Transverse colon (tissue), 4 donors: ENCODE measurements at regions of chr9 and their contacts with region 1.

Region 1: GRCh38 chr9:26326473-26327044 is 566.0 kb downstream of the CAAP1 start:
- DNase-seq: peak; percentile 16
- H3K4me3 ChIP-seq: no peak overlapping the region
- H3K27ac ChIP-seq: no peak overlapping the region
- H3K4me1 ChIP-seq: peaks cover 0 to 42% (median 7%) of the 10 kb centered on the region in 4 donors
- H3K27me3 ChIP-seq: no peaks in the 10 kb centered on the region
- CTCF ChIP-seq: peak; percentile 63 to 84 (median 73)
- EP300 ChIP-seq: no peak
- POLR2A ChIP-seq: no peak

Region 2: DNA sequence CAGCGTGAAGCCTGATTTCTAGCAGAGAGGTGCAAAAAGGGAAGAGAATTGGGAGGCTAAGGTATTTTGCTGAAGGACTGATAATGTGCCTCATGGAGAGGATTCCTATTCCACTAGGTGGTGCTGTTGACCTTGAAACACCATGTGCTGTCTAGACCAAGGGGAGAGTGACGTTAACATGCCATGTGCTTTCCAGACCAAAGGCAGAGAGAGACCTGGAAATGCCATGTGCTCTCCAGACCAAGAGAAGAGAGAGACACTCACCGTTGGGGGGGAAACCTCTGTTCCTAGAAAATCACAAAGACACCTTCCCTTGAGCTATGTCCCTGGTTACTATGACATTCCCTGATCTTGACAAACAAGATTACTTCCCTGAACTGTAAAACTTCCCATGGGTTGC is 362.3 kb before region 1 on chr9:
- in situ Hi-C with region 1: loop called in 1 of 4 experiments (anchors 25 kb)
- intact Hi-C with region 1: no loop called
- DNase-seq: no peak
- H3K4me3 ChIP-seq: no peak overlapping the region
- H3K27ac ChIP-seq: no peak overlapping the region
- H3K4me1 ChIP-seq: no peaks in the 10 kb centered on the region
- H3K27me3 ChIP-seq: no peaks in the 10 kb centered on the region
- CTCF ChIP-seq: peak; percentile 17 to 34 (median 27)
- EP300 ChIP-seq: no peak
- POLR2A ChIP-seq: no peak

Region 3: DNA sequence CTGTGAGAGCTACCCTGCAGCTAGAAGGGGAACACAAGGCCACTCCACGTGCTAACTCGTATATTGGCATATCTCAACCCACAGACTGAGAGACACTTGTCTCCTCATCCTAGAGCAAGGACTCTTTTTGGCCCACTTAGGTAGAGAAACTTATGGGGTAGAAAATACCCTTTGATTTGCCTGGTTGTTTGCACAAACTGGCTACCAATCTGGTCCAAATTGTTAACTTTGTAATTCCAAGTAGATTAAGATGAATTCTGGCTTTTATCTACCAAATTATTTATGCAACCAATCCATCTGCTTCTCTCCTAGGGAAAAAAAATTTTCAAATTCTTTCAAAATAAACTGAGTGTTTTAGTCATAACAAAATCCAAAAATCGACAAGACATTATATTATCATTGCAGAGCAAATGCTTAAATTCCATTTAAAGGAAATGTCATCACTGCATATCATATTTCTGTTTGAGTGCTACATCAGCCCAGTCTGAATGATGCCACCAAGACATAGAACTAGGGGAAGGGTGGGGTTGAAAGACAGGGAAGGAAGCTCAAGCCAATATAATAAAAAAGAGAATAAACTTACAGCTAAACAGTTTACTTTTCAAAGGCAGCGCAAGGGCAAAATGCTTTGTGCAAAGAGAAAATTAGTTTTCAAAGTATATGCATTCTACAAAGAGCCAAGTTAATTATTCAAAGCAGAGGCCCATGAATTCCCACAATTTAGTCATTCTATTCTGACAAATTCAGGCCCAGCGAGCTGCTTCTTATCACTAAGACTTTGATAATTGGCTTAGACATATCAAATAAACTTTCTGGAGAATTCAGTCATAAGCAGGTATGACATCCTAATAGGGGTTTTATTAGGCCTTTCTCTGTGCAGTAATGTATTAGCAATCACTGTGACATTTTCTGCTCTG is 368.1 kb after region 1 on chr9:
- in situ Hi-C with region 1: no loop called
- intact Hi-C with region 1: no loop called
- DNase-seq: no peak
- H3K4me3 ChIP-seq: no peak overlapping the region
- H3K27ac ChIP-seq: no peak overlapping the region
- H3K4me1 ChIP-seq: no peaks in the 10 kb centered on the region
- H3K27me3 ChIP-seq: no peaks in the 10 kb centered on the region
- CTCF ChIP-seq: no peak
- EP300 ChIP-seq: no peak
- POLR2A ChIP-seq: no peak